Ascending aorta (tissue), 2 donors: ENCODE measurements at regions of chr11 and their contacts with region 1.

Region 1: DNA sequence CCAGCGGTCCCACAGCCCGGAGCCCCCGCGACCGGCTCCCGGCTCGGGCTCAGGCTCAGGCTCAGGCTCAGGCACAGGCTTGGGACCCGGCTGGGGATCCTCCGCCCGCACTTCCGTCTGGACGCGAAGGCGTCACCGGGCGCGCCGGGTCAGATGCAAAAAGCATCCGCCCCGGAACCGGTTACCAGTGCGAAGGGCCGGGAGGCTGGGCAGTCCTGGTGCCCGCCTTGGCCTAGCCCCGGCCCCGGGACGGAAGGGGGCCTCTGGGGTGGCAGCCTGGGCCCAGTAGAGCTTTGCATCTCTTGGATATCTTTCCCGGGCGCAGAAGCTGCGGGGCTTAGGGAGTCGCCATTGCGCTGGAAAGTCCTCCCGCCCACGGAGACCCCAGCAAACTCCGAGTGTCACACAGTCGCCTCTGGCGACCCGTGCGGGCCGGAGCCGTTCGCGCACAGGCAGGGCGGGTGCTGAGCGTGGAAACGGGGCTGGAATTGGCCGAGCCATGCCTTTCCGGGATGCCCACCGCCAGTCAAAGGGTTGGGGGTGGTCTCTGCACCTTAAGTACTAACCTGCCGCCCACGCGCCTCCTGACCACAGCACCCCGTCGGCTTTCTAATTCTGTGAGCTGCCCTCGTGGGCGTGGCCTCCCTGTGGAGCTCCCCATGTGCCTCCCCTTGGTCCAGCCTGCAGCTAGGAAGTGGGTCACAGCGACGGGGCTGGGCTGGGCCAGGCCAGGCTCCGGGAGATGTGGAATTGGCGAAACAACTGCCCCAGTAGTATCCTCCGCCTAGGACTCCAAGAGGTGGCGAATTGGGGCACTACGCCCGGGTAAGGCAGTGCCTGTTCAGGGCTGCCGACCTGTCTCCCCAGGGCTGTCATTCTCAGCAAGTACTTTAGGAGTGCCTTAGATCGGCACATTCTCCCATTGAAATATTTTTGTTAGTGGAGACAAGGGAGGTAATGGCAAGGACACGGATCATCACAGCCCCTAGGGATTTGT is at the start of gene TMEM9B:
- DNase-seq: peak; percentile 61 to 95
- H3K4me3 ChIP-seq: peak within 1 kb of the TSS; percentile 83 to 88
- H3K27ac ChIP-seq: peak within 1 kb of the TSS; percentile 95 to 97
- H3K4me1 ChIP-seq: peaks cover 0 to 12% of the 10 kb centered on the region in 2 donors
- H3K27me3 ChIP-seq: no peaks in the 10 kb centered on the region
- CTCF ChIP-seq: no peak
- total RNA-seq, gene TMEM9B: 42.4 TPM

Region 2: GRCh38 chr11:8813658-8814057 is 151.0 kb before region 1 on chr11:
- intact Hi-C with region 1: loop called (anchors 2 kb)
- DNase-seq: peak in 1 of 2 donors; percentile 90
- H3K4me3 ChIP-seq: no peak overlapping the region
- H3K27ac ChIP-seq: no peak overlapping the region
- H3K4me1 ChIP-seq: peaks cover 0 to 7% of the 10 kb centered on the region in 2 donors
- H3K27me3 ChIP-seq: no peaks in the 10 kb centered on the region
- CTCF ChIP-seq: peak; percentile 69 to 94 (median 85)

Region 3: DNA sequence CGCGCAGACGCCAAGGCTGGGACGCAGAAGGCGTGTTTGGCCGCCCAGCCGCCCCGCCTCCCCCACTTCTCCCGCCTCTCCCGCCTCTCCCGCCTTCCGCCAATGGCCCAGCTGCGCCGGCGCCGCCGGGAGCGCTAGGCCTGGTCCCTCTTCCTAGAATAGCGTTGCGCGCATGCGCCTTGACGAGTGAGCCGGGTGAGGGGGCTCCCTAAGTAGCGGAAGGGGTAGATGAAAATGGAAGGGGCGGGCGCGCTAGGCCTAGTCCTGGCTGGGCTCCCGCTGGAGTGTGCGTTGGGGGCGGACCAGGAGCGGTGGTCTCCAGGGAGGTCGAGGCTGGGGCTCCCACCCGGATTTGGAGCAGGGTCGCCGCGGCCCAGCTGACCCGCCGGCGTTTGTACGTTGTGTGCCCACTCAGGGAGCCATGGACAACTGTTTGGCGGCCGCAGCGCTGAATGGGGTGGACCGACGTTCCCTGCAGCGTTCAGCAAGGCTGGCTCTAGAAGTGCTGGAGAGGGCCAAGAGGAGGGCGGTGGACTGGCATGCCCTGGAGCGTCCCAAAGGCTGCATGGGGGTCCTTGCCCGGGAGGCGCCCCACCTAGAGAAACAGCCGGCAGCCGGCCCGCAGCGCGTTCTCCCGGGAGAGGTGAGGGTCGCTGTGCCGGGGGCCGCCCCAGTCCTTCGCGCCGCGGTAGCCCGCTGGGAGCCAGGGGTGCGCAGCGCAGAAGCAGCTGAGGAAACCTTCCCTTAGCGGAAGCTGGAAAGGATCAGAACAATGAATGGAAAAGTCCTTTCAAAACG is 53.4 kb before region 1 on chr11 and contains the start of gene AKIP1:
- intact Hi-C with region 1: loop called (anchors 1 kb)
- DNase-seq: peak; percentile 81 to 97
- H3K4me3 ChIP-seq: peak within 1 kb of the TSS; percentile 72 to 79
- H3K27ac ChIP-seq: peak within 1 kb of the TSS; percentile 88 to 91
- H3K4me1 ChIP-seq: peaks cover 4 to 12% of the 10 kb centered on the region in 2 donors
- H3K27me3 ChIP-seq: no peaks in the 10 kb centered on the region
- CTCF ChIP-seq: no peak
- total RNA-seq, gene AKIP1: 11.4 TPM

Region 4: GRCh38 chr11:9003573-9004309 is 39.1 kb after region 1 on chr11 and contains the start of gene NRIP3:
- intact Hi-C with region 1: loop called (anchors 2 kb)
- DNase-seq: peak in 1 of 2 donors; percentile 85
- H3K4me3 ChIP-seq: peak within 1 kb of the TSS; percentile 40 to 61
- H3K27ac ChIP-seq: peak within 1 kb of the TSS in 1 of 2 donors; percentile 0
- H3K4me1 ChIP-seq: peaks cover 0 to 14% of the 10 kb centered on the region in 2 donors
- H3K27me3 ChIP-seq: no peaks in the 10 kb centered on the region
- CTCF ChIP-seq: no peak
- total RNA-seq, gene NRIP3: 7.7 TPM